CD14-positive monocyte (primary cell): ENCODE measurements at regions of chr21 and their contacts with region 1.

Region 1: GRCh38 chr21:45130324-45130774 is 56.0 kb downstream of the ADARB1 start:
- DNase-seq: peak; percentile 48 to 82 (median 70)
- H3K4me3 ChIP-seq: peak overlapping the region; percentile 28 to 63 (median 31)
- H3K4me3 Mint-ChIP-seq: peak overlapping the region; percentile 66 to 79
- H3K27ac ChIP-seq: peak overlapping the region; percentile 50 to 68
- H3K27ac Mint-ChIP-seq: peak overlapping the region; percentile 48 to 91 (median 88)
- H3K4me1 ChIP-seq: peaks cover 36 to 46% of the 10 kb centered on the region in 2 donors
- H3K4me1 Mint-ChIP-seq: peaks cover 46% of the 10 kb centered on the region
- H3K27me3 ChIP-seq: no peaks in the 10 kb centered on the region
- H3K27me3 Mint-ChIP-seq: peaks cover 1 to 14% (median 3%) of the 10 kb centered on the region in 3 donors
- CTCF ChIP-seq: no peak

Region 2: GRCh38 chr21:45074048-45074817 is 56.1 kb before region 1 on chr21 and contains the start of gene ADARB1:
- intact Hi-C with region 1: loop called in 1 of 2 experiments (anchors 10 kb)
- DNase-seq: peak; percentile 30 to 55 (median 54)
- H3K4me3 ChIP-seq: peak within 1 kb of the TSS; percentile 50 to 82 (median 82)
- H3K4me3 Mint-ChIP-seq: peak within 1 kb of the TSS; percentile 89 to 92
- H3K27ac ChIP-seq: no peak within 1 kb of the TSS
- H3K27ac Mint-ChIP-seq: peak within 1 kb of the TSS in 5 of 7 donors; percentile 53 to 75 (median 67)
- H3K4me1 ChIP-seq: peaks cover 30 to 39% of the 10 kb centered on the region in 2 donors
- H3K4me1 Mint-ChIP-seq: peaks cover 30% of the 10 kb centered on the region
- H3K27me3 ChIP-seq: peaks cover 11 to 22% of the 10 kb centered on the region in 2 donors
- H3K27me3 Mint-ChIP-seq: peaks cover 18 to 31% (median 28%) of the 10 kb centered on the region in 3 donors
- CTCF ChIP-seq: no peak
- polyA plus RNA-seq, gene ADARB1: 0.40 to 2.6 (median 1.0) TPM

Region 3: GRCh38 chr21:45080639-45081414 is 49.5 kb before region 1 on chr21:
- intact Hi-C with region 1: loop called (anchors 2 to 10 kb)
- DNase-seq: no peak
- H3K4me3 ChIP-seq: no peak overlapping the region
- H3K4me3 Mint-ChIP-seq: no peak overlapping the region
- H3K27ac ChIP-seq: no peak overlapping the region
- H3K27ac Mint-ChIP-seq: no peak overlapping the region
- H3K4me1 ChIP-seq: peaks cover 22 to 27% of the 10 kb centered on the region in 2 donors
- H3K4me1 Mint-ChIP-seq: peaks cover 34% of the 10 kb centered on the region
- H3K27me3 ChIP-seq: peaks cover 5 to 9% of the 10 kb centered on the region in 2 donors
- H3K27me3 Mint-ChIP-seq: peaks cover 9 to 32% (median 14%) of the 10 kb centered on the region in 3 donors
- CTCF ChIP-seq: no peak